PC-3 (cell line): ENCODE measurements at regions of chr4 and their contacts with region 1.

Region 1: GRCh38 chr4:158371158-158371557 is 150.5 kb upstream of the RXFP1 start:
- DNase-seq: peak; percentile 50
- ATAC-seq: peak; percentile 72
- H3K4me3 ChIP-seq: no peak overlapping the region
- H3K27ac ChIP-seq: peak overlapping the region; percentile 80
- H3K4me1 ChIP-seq: peaks cover 29% of the 10 kb centered on the region
- H3K27me3 ChIP-seq: no peaks in the 10 kb centered on the region
- CTCF ChIP-seq: no peak

Region 2: GRCh38 chr4:158314756-158315487 is 56.2 kb before region 1 on chr4:
- CTCF ChIA-PET with region 1: no interaction called
- POLR2A ChIA-PET with region 1: no interaction called
- intact Hi-C with region 1: loop called (anchors 2 kb)
- DNase-seq: peak; percentile 88
- ATAC-seq: peak; percentile 82
- H3K4me3 ChIP-seq: no peak overlapping the region
- H3K27ac ChIP-seq: peak overlapping the region; percentile 86
- H3K4me1 ChIP-seq: peaks cover 38% of the 10 kb centered on the region
- H3K27me3 ChIP-seq: no peaks in the 10 kb centered on the region
- CTCF ChIP-seq: no peak

Region 3: GRCh38 chr4:158333820-158334219 is 37.3 kb before region 1 on chr4:
- CTCF ChIA-PET with region 1: no interaction called
- POLR2A ChIA-PET with region 1: no interaction called
- intact Hi-C with region 1: no loop called
- DNase-seq: no peak
- ATAC-seq: no peak
- H3K4me3 ChIP-seq: no peak overlapping the region
- H3K27ac ChIP-seq: no peak overlapping the region
- H3K4me1 ChIP-seq: no peaks in the 10 kb centered on the region
- H3K27me3 ChIP-seq: no peaks in the 10 kb centered on the region
- CTCF ChIP-seq: no peak

Region 4: DNA sequence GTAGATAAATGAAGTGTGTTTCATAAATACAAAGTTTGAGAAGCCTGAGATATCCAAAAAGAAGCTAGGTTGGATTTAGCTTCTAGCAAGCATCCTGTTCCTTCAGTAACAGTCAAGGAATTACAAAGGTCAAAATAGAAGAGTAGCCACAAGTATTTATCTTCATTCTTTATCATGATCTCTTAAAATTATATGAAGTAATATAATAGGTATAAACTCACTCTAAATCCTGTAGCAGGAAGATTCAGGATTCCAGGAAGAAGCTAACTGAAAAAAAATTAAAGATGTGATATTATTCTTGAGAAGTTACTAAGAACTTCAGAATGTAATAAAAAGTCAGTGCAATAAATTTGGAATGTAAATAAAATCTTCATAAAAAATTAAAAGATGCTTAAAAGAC is 119.5 kb after region 1 on chr4:
- CTCF ChIA-PET with region 1: no interaction called
- POLR2A ChIA-PET with region 1: no interaction called
- intact Hi-C with region 1: loop called (anchors 2 kb)
- DNase-seq: peak; percentile 10
- ATAC-seq: peak; percentile 77
- H3K4me3 ChIP-seq: no peak overlapping the region
- H3K27ac ChIP-seq: no peak overlapping the region
- H3K4me1 ChIP-seq: peaks cover under 1% of the 10 kb centered on the region; the same call in 1 of the 2 replicates
- H3K27me3 ChIP-seq: no peaks in the 10 kb centered on the region
- CTCF ChIP-seq: no peak